ENCODE measurements at regions of chr7 and their contacts with region 1.

Region 1: GRCh38 chr7:24936121-24936824 is 43.7 kb downstream of the OSBPL3 start:
- DNase-seq: no peak
- ATAC-seq: no peak

Region 2: GRCh38 chr7:24956021-24956420 is 19.7 kb after region 1 on chr7:
- intact Hi-C with region 1: loop called (anchors 2 kb)
- DNase-seq: no peak
- ATAC-seq: no peak